K562 (cell line): ENCODE measurements at regions of chr5 and their contacts with region 1.

Region 1: GRCh38 chr5:139422307-139422893 is 16.9 kb downstream of the DNAJC18 start:
- DNase-seq: peak; percentile 78 to 82 (median 80)
- ATAC-seq: peak; percentile 91
- H3K4me3 ChIP-seq: no peak overlapping the region
- H3K27ac ChIP-seq: no peak overlapping the region
- H3K4me1 ChIP-seq: peaks cover 3 to 5% of the 10 kb centered on the region in 2 experiments; a peak in 3 of 5 replicates
- H3K27me3 ChIP-seq: no peaks in the 10 kb centered on the region
- CTCF ChIP-seq: peak; percentile 84 to 96 (median 91)
- EP300 ChIP-seq: no peak
- POLR2A ChIP-seq: no peak
- RAD21 ChIP-seq: peak; percentile 97 to 99

Region 2: GRCh38 chr5:139315056-139315615 is 107.3 kb before region 1 on chr5:
- CTCF ChIA-PET with region 1: no interaction called
- POLR2A ChIA-PET with region 1: no interaction called
- in situ Hi-C with region 1: no loop called
- intact Hi-C with region 1: no loop called
- DNase-seq: no peak
- ATAC-seq: no peak
- H3K4me3 ChIP-seq: no peak overlapping the region
- H3K27ac ChIP-seq: no peak overlapping the region
- H3K4me1 ChIP-seq: peaks cover 3% of the 10 kb centered on the region in 2 experiments; a peak in 3 of 5 replicates
- H3K27me3 ChIP-seq: no peaks in the 10 kb centered on the region
- CTCF ChIP-seq: no peak
- EP300 ChIP-seq: no peak
- POLR2A ChIP-seq: no peak
- RAD21 ChIP-seq: no peak

Region 3: DNA sequence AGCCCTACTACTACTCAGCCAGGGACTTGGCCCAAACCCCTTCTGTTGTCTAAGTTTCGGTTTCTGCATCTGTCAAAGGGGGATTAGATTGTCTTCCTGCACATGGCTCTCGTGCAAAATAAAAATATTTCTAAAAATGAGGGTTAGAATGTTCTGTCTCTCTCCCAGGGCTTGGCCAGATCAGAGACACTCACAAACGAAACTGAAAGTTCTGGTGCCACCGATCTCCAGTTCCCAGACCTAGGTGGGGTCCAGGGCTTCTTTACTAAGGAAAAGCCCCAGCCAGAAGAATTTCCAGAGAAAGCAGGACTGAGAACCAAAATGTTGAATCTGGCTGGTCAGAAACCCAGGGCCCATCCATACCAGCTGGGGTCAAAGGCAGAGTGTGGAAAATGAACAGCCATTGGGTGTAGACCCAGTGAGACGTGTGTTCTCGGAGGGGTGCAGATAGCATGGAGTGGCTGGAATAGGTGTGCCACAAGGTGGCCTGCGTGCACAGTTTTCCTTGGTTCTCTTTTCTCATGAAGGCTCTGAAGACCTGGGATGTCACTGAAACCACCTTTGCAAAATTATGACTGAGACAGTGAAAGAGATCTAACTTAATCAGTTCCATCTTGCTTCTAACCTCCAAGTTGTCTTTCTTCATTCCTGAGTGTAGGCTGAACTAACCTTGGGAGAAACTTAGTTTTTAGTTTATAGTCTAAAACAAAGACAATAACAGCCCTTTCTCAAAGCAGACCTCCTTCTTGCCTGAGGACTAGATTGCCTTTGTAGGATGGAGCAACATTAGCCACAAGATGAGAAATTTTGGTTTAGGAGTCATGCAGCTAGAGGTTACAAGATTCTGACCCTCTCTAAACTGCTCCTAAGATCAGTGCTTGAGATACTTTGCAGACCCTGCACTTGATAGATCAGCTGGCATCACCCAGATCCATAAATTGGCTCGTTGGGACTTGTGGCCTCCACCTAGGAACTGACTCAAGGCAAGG is 37.0 kb before region 1 on chr5:
- CTCF ChIA-PET with region 1: no interaction called
- POLR2A ChIA-PET with region 1: no interaction called
- in situ Hi-C with region 1: no loop called
- intact Hi-C with region 1: loop called (anchors 1 kb)
- DNase-seq: peak; percentile 66 to 80 (median 72)
- ATAC-seq: peak; percentile 88
- H3K4me3 ChIP-seq: peak overlapping the region; percentile 24
- H3K27ac ChIP-seq: peak overlapping the region; percentile 21; the same call in 2 of the 3 replicates
- H3K4me1 ChIP-seq: peaks cover 26 to 60% of the 10 kb centered on the region in 2 experiments; a peak in 4 of 5 replicates
- H3K27me3 ChIP-seq: no peaks in the 10 kb centered on the region
- CTCF ChIP-seq: peak; percentile 67 to 77 (median 75)
- EP300 ChIP-seq: peak; percentile 14; the same call in 1 of the 2 replicates
- POLR2A ChIP-seq: no peak
- RAD21 ChIP-seq: peak; percentile 51 to 86

Region 4: DNA sequence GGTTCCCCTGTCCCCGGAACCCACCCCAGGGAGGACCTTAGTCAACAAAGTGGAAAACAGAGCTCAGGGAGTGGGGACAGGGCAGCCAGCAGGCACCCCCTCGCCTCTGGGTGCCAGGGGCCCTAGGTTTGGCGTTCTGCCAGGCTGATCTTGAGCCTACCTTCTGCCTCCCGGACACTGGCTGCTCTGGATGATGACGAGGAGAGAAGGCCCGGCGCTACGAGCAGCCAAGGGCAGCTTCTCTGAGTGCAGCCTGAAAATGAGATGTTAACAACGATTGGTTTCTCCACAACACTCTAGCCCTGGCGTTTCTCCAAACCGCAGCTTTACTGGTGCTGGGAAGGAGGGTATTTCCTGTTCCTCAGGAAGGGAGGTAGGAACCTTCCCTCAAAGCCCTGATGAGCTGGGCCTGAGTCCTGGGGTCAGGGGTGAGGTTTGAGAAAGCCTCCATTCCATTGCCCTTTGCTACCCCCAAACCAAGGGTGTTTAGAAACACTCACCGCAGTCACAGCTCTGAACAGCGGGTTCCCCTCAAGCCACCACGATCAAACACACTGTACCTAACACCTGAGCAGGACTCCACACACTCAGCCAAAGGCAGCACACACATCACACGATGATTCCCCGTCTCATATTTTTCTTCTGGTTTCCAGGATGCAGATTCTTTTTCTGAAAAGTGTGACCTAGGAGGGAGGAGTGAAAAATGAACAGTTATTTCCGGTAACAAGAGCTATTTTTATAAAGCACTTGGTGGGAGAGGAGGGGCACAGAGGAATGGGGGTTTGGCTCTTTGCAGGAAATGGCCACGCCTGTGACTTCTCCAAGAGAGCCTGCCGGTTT is 59.9 kb after region 1 on chr5 and contains the start of gene STING1:
- CTCF ChIA-PET with region 1: no interaction called
- POLR2A ChIA-PET with region 1: no interaction called
- in situ Hi-C with region 1: no loop called
- intact Hi-C with region 1: loop called (anchors 1 kb)
- DNase-seq: peak; percentile 75 to 96 (median 82)
- ATAC-seq: peak; percentile 79
- H3K4me3 ChIP-seq: peak within 1 kb of the TSS; percentile 58
- H3K27ac ChIP-seq: peak within 1 kb of the TSS; percentile 98
- H3K4me1 ChIP-seq: peaks cover 52 to 53% of the 10 kb centered on the region in 2 experiments
- H3K27me3 ChIP-seq: no peaks in the 10 kb centered on the region
- CTCF ChIP-seq: 0 out of 6 replicates have a peak, but pooled peaks of 1 of the 3 experiments have one; percentile 3
- EP300 ChIP-seq: peak; percentile 46; the same call in 1 of the 2 replicates
- POLR2A ChIP-seq: peak; percentile 76
- RAD21 ChIP-seq: peak in 1 of 2 experiments; percentile 32; a peak in 1 of 4 replicates
- polyA plus RNA-seq, gene STING1: 20.8 to 23.3 TPM

Region 5: GRCh38 chr5:139517683-139518564 is 95.5 kb after region 1 on chr5:
- CTCF ChIA-PET with region 1: interaction called, 25 read pairs
- POLR2A ChIA-PET with region 1: interaction called, 3 read pairs
- in situ Hi-C with region 1: loop called (anchors 5 kb)
- intact Hi-C with region 1: loop called (anchors 1 kb)
- DNase-seq: peak; percentile 95 to 96 (median 96)
- ATAC-seq: peak; percentile 95
- H3K4me3 ChIP-seq: peak overlapping the region; percentile 44
- H3K27ac ChIP-seq: peak overlapping the region; percentile 90
- H3K4me1 ChIP-seq: peaks cover 14 to 17% of the 10 kb centered on the region in 2 experiments
- H3K27me3 ChIP-seq: no peaks in the 10 kb centered on the region
- CTCF ChIP-seq: peak; percentile 94 to 96 (median 95)
- EP300 ChIP-seq: peak; percentile 60; the same call in 1 of the 2 replicates
- POLR2A ChIP-seq: peak; percentile 89
- RAD21 ChIP-seq: peak; percentile 62 to 67

Region 6: DNA sequence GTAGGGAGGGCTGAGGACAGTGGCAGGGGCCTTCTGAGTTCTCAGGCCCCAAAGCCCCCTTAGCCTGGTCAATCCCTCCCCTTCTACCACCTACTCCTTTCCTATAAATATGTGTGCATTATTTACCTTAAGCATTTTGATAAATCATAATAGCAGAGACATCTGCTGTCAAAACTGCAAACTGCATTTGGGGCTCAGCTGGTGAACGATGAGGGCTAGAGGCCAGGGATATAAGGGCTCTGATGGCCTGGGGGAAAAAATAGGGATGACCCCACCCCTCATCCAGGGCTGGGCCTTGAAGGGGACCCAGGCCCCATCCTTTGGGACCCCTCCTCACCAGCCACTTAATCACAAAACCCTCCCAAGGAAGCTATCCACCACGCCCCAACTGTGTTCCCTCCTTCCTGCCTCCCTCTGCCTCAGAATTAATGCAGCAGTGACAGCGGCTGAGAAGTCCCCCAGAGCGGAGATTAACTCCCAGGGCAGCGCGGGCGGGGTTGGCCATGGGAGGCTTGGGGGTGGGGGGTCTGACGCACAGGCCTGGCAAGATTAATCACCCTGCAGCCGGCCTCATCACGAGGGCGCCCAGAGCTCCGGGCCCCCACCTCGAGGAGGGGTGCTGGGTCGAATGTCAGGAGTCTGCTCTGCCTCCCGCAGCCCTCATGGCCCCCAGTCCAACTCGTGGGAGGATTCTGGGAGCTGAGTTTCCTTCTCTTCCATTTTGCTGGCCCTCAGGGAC is 267.8 kb after region 1 on chr5:
- CTCF ChIA-PET with region 1: no interaction called
- POLR2A ChIA-PET with region 1: no interaction called
- in situ Hi-C with region 1: no loop called
- intact Hi-C with region 1: loop called (anchors 5 kb)
- DNase-seq: peak; percentile 60 to 85 (median 70)
- ATAC-seq: peak; percentile 70
- H3K4me3 ChIP-seq: no peak overlapping the region
- H3K27ac ChIP-seq: peak overlapping the region; percentile 29
- H3K4me1 ChIP-seq: peaks cover 38 to 60% of the 10 kb centered on the region in 2 experiments
- H3K27me3 ChIP-seq: no peaks in the 10 kb centered on the region; a peak in 1 of 5 replicates
- CTCF ChIP-seq: peak; percentile 53 to 63 (median 56); a peak in 5 of 6 replicates
- EP300 ChIP-seq: no peak
- POLR2A ChIP-seq: no peak
- RAD21 ChIP-seq: peak; percentile 55 to 73; a peak in 3 of 4 replicates

Region 7: GRCh38 chr5:139765409-139766217 is 343.2 kb after region 1 on chr5:
- CTCF ChIA-PET with region 1: interaction called, 11 read pairs
- POLR2A ChIA-PET with region 1: no interaction called
- in situ Hi-C with region 1: loop called (anchors 10 kb)
- intact Hi-C with region 1: loop called (anchors 10 kb)
- DNase-seq: peak; percentile 80 to 87 (median 84)
- ATAC-seq: peak; percentile 95
- H3K4me3 ChIP-seq: peak overlapping the region; percentile 66
- H3K27ac ChIP-seq: no peak overlapping the region; the same call in 2 of the 3 replicates
- H3K4me1 ChIP-seq: peaks cover 2 to 22% of the 10 kb centered on the region in 2 experiments; a peak in 3 of 5 replicates
- H3K27me3 ChIP-seq: no peaks in the 10 kb centered on the region
- CTCF ChIP-seq: peak; percentile 73 to 96 (median 86)
- EP300 ChIP-seq: no peak
- POLR2A ChIP-seq: no peak
- RAD21 ChIP-seq: peak; percentile 98 to 99